Sciatic nerve (tissue), 2 donors: ENCODE measurements at regions of chr22 and their contacts with region 1.

Region 1: DNA sequence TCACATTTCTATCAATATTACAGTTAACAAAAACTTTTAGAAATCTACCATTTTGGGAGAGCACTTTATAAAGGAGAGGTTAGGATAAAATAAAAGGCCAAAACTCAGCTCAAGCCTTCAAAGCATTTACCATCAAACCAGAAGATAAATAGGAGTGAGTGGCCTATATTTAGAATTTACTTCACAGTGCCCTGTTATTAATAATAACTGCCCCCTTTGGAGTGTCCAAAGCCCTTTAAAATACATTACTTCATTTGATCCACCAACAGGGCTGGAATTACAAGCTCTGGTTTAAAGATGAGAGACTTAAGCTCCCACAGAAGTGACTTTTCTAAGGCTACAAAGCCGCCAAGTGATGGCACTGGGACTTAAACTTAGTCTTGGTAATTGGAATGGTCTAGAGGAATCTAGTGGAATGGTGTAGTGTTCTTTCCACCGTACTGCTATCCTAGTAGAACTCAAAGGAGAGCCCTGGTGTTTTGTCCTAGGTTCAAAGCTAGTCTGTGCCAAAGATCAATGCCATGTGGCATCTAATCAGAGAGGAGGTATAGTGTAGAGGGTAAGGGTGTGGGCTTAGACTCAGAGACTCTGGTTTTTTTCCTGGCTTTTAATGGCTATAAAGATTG is 21.2 kb upstream of the MTMR3 start:
- DNase-seq: no peak
- ATAC-seq: no peak

Region 2: GRCh38 chr22:29830585-29830984 is 31.2 kb before region 1 on chr22:
- intact Hi-C with region 1: loop called (anchors 1 kb)
- DNase-seq: no peak
- ATAC-seq: no peak

Region 3: DNA sequence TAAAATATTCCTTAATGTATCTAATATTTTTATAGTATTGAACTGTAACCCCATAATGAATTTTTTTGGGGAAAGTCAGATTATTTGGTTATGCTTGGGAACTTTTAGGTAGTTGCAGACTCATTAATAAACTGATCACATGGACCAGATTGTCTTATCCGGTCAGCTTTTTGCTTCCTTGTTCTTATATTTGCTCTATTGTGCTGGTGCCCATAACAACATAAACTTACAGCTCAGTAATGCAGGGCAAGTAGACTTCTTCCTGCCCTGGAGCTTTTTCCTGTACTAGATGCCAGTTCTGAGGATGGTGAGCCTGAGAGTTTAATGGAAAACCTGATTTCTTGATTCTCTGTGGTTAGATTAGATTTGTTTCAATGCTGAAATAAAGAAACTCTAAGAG is 74.4 kb after region 1 on chr22:
- intact Hi-C with region 1: no loop called
- DNase-seq: no peak
- ATAC-seq: no peak